ENCODE measurements at regions of chr1 and their contacts with region 1.

Region 1: GRCh38 chr1:110312188-110313121 is 26.7 kb upstream of the RBM15 start:
- DNase-seq: peak; percentile 83
- ATAC-seq: peak; percentile 96 to 98
- H3K4me3 ChIP-seq: no peak overlapping the region
- H3K27ac ChIP-seq: no peak overlapping the region
- H3K4me1 ChIP-seq: peaks cover 11% of the 10 kb centered on the region
- H3K27me3 ChIP-seq: no peaks in the 10 kb centered on the region
- CTCF ChIP-seq: peak; percentile 97

Region 2: GRCh38 chr1:109985276-109986053 is 327.0 kb before region 1 on chr1:
- intact Hi-C with region 1: no loop called
- DNase-seq: no peak
- ATAC-seq: no peak
- H3K4me3 ChIP-seq: peak overlapping the region; percentile 85
- H3K27ac ChIP-seq: peak overlapping the region; percentile 97
- H3K4me1 ChIP-seq: peaks cover 71% of the 10 kb centered on the region
- H3K27me3 ChIP-seq: no peaks in the 10 kb centered on the region
- CTCF ChIP-seq: no peak

Region 3: GRCh38 chr1:110209715-110210603 is 102.5 kb before region 1 on chr1 and contains the start of gene KCNC4:
- intact Hi-C with region 1: loop called (anchors 5 kb)
- DNase-seq: peak; percentile 94
- ATAC-seq: peak; percentile 93 to 94
- H3K4me3 ChIP-seq: peak within 1 kb of the TSS; percentile 82
- H3K27ac ChIP-seq: peak within 1 kb of the TSS; percentile 87
- H3K4me1 ChIP-seq: peaks cover 40% of the 10 kb centered on the region
- H3K27me3 ChIP-seq: peaks cover 11% of the 10 kb centered on the region
- CTCF ChIP-seq: no peak
- total RNA-seq, gene KCNC4: 10.0 TPM

Region 4: DNA sequence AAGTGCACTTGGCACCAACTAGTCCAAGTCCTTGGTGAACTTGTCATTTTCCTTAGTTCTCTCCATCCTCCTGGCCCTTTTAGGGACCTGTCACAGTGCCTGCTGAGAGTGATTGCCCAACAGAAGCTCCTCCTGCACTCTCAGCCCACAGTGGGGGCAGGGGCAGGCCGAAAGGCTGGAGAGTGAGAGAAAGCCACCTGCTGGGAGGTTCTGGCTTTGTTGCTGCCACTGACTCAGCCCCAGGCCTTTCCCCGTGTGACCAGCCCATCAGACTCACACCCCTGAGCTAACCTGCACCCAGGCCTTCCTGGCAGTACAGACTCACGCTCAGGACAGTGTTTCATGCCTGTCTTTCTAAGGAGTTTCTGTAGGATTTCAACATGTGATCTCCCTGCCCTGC is 121.3 kb after region 1 on chr1:
- intact Hi-C with region 1: no loop called
- DNase-seq: peak; percentile 80
- ATAC-seq: peak; percentile 94 to 96
- H3K4me3 ChIP-seq: no peak overlapping the region
- H3K27ac ChIP-seq: peak overlapping the region; percentile 53
- H3K4me1 ChIP-seq: peaks cover 13% of the 10 kb centered on the region
- H3K27me3 ChIP-seq: no peaks in the 10 kb centered on the region
- CTCF ChIP-seq: peak; percentile 17

Region 5: GRCh38 chr1:110477041-110477440 is 164.6 kb after region 1 on chr1:
- intact Hi-C with region 1: no loop called
- DNase-seq: no peak
- ATAC-seq: peak; percentile 45 to 81
- H3K4me3 ChIP-seq: no peak overlapping the region
- H3K27ac ChIP-seq: no peak overlapping the region
- H3K4me1 ChIP-seq: peaks cover 8% of the 10 kb centered on the region
- H3K27me3 ChIP-seq: no peaks in the 10 kb centered on the region
- CTCF ChIP-seq: no peak

Measured in lower lobe of right lung (tissue), 2 donors.